WTC11 (cell line): ENCODE measurements at regions of chr12 and their contacts with region 1.

Region 1: GRCh38 chr12:110431957-110432587 is 18.1 kb downstream of the ARPC3 start:
- DNase-seq: no peak
- ATAC-seq: no peak
- H3K4me3 Mint-ChIP-seq: no peak overlapping the region
- H3K27ac Mint-ChIP-seq: no peak overlapping the region
- H3K4me1 Mint-ChIP-seq: no peaks in the 10 kb centered on the region
- H3K27me3 Mint-ChIP-seq: no peaks in the 10 kb centered on the region
- CTCF ChIP-seq: no peak

Region 2: DNA sequence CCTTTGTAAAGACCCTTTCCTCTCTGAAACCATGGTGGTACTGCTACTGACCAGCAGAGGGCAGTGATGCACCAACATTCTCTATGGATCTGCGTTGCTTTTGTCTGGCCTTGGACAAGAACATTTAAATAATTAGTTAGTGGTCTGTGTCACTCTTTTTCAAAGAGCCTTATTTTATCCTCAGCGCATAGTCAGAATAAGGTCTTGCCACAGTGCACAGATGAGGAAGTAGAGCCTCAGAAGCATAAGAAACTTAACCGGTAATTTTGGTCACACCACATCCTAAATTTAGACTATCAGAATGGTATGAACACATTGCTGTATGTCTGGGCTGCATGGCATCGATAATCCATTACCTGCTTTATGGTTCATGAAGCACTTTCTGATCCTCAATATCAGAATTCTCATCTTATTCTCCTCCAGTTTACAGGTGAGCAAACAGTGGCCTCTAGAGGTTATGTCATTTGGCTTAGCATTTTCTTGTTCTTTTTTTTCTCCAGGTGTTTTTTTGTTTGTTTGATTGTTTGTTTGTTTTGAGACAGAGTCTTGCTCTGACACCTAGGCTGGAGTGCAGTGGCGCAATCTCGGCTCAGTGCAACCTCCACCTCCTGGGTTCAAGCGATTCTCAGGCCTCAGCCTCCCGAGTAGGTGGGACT is 331.6 kb before region 1 on chr12:
- CTCF ChIA-PET with region 1: interaction called, 33 read pairs
- POLR2A ChIA-PET with region 1: no interaction called
- DNase-seq: peak; percentile 79
- ATAC-seq: peak; percentile 65
- H3K4me3 Mint-ChIP-seq: no peak overlapping the region
- H3K27ac Mint-ChIP-seq: no peak overlapping the region
- H3K4me1 Mint-ChIP-seq: peaks cover 6% of the 10 kb centered on the region
- H3K27me3 Mint-ChIP-seq: no peaks in the 10 kb centered on the region; the same call in 1 of the 2 replicates
- CTCF ChIP-seq: peak; percentile 79

Region 3: DNA sequence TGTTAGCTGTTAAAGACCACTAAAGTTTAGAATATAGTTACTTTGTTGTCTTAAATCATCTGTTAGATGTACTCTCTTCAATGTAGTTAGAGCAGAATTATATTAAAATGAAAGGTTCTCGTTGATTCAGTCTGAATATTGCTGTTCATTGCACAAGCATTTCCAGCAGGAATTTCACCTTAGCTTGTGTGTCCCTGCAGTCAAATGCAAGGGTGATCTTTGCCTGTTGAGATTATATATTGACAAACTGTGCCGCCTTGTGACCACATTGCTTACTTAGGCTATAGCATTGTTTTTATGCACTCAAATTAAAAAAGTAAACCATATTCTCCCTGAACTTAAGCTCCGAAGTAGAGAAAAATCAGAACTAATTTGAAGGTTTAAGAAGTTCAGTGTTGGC is 111.5 kb before region 1 on chr12:
- CTCF ChIA-PET with region 1: interaction called, 11 read pairs
- POLR2A ChIA-PET with region 1: no interaction called
- DNase-seq: no peak
- ATAC-seq: no peak
- H3K4me3 Mint-ChIP-seq: no peak overlapping the region
- H3K27ac Mint-ChIP-seq: peak overlapping the region; percentile 39
- H3K4me1 Mint-ChIP-seq: no peaks in the 10 kb centered on the region
- H3K27me3 Mint-ChIP-seq: no peaks in the 10 kb centered on the region
- CTCF ChIP-seq: no peak

Region 4: GRCh38 chr12:110371408-110372055 is 60.5 kb before region 1 on chr12:
- CTCF ChIA-PET with region 1: interaction called, 29 read pairs
- POLR2A ChIA-PET with region 1: interaction called, 5 read pairs
- DNase-seq: no peak
- ATAC-seq: peak; percentile 7; the same call in 1 of the 2 replicates
- H3K4me3 Mint-ChIP-seq: no peak overlapping the region
- H3K27ac Mint-ChIP-seq: peak overlapping the region; percentile 27; the same call in 1 of the 2 replicates
- H3K4me1 Mint-ChIP-seq: no peaks in the 10 kb centered on the region
- H3K27me3 Mint-ChIP-seq: no peaks in the 10 kb centered on the region
- CTCF ChIP-seq: no peak

Region 5: GRCh38 chr12:110421159-110421661 is 10.9 kb before region 1 on chr12:
- CTCF ChIA-PET with region 1: interaction called, 22 read pairs
- POLR2A ChIA-PET with region 1: interaction called, 6 read pairs
- DNase-seq: no peak
- ATAC-seq: no peak
- H3K4me3 Mint-ChIP-seq: no peak overlapping the region
- H3K27ac Mint-ChIP-seq: no peak overlapping the region
- H3K4me1 Mint-ChIP-seq: peaks cover 8% of the 10 kb centered on the region; the same call in 1 of the 2 replicates
- H3K27me3 Mint-ChIP-seq: 0 out of 2 replicates have a peak, but pooled peaks cover 3% of the 10 kb centered on the region
- CTCF ChIP-seq: no peak

Region 6: GRCh38 chr12:110600254-110600653 is 168.2 kb after region 1 on chr12:
- CTCF ChIA-PET with region 1: interaction called, 10 read pairs
- POLR2A ChIA-PET with region 1: no interaction called
- DNase-seq: no peak
- ATAC-seq: no peak
- H3K4me3 Mint-ChIP-seq: no peak overlapping the region
- H3K27ac Mint-ChIP-seq: no peak overlapping the region
- H3K4me1 Mint-ChIP-seq: no peaks in the 10 kb centered on the region
- H3K27me3 Mint-ChIP-seq: no peaks in the 10 kb centered on the region
- CTCF ChIP-seq: no peak

Region 7: DNA sequence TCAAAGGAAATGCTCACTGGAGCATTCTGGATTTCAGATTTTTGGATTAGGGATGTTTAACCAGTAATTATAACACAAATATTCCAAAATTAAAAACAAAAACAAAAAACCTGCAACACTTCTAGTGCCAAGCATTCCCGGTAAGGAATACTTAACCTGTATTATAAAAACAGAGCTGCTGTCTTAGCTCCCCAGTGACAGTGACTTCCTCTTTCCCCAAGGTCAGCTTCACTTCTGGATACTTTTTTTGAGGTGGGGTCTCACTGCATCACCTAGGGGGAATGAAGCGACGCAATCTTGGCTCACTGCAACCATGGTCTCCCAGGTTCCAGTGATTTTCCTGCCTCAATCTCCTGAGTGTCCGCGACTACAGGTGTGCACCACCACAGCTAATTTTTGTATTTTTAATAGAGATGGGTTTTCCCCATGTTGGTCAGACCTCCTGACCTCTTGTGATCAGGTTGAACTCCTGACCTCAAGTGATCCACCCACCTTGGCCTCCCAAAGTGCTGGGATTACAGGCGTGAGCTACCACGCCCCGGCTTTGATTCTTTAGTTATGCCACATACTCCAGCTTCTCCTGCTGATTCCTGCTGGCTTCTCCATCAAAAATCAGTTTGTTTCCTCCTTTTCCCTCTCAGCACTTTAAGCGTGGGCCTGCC is 294.8 kb after region 1 on chr12:
- CTCF ChIA-PET with region 1: no interaction called
- POLR2A ChIA-PET with region 1: no interaction called
- DNase-seq: no peak
- ATAC-seq: no peak; the same call in 1 of the 2 replicates
- H3K4me3 Mint-ChIP-seq: no peak overlapping the region
- H3K27ac Mint-ChIP-seq: peak overlapping the region; percentile 96; the same call in 1 of the 2 replicates
- H3K4me1 Mint-ChIP-seq: peaks cover 37% of the 10 kb centered on the region
- H3K27me3 Mint-ChIP-seq: no peaks in the 10 kb centered on the region
- CTCF ChIP-seq: no peak

Region 8: GRCh38 chr12:110813285-110813684 is 381.2 kb after region 1 on chr12:
- CTCF ChIA-PET with region 1: no interaction called
- POLR2A ChIA-PET with region 1: no interaction called
- DNase-seq: no peak
- ATAC-seq: peak; percentile 23
- H3K4me3 Mint-ChIP-seq: no peak overlapping the region
- H3K27ac Mint-ChIP-seq: no peak overlapping the region
- H3K4me1 Mint-ChIP-seq: peaks cover 35% of the 10 kb centered on the region
- H3K27me3 Mint-ChIP-seq: peaks cover 78% of the 10 kb centered on the region
- CTCF ChIP-seq: no peak